ENCODE measurements at regions of chr12 and their contacts with region 1.

Region 1: GRCh38 chr12:12376646-12377448 is 20.0 kb downstream of the BORCS5 start:
- DNase-seq: peak; percentile 77
- CTCF ChIP-seq: peak; percentile 46

Region 2: DNA sequence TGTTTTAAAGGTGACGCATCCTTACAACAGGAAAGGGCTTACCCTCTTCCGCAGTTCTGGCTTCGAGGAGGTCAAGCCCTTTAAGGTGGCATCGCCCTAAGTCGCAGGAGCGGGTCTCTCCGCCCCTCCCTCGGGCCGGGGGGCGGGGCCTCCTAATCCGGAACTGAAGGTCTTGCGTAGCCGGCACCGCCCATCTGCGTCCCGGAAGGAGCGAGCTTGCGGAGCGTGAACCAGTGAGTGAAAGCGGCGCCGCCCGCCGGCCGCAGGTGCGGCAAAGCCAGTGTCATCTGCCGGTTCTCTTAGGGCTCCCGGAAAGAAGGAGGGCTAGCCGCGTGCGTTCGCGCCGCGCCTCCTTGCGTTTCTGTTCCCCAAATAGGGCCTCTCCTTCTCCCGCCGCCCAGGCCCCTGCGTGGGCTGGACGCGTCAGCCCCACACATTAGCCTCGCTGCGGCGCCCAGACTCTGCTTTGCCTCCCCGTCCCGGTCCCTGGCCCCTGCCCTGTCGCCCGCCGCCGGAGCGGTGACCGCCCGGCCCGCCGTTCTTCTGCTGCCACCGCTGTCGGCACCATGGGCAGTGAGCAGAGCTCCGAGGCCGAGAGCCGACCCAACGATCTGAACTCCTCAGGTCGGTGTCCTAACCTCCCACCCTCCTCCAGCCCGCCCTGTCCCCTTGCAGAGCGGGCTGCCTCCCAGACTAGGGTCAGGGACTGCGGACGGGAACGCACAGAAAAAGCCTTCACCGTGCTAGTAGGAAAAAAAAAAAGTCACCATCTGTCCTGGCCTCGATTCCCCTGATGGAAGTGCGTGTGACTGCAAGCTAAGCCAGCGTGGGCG is 19.7 kb before region 1 on chr12 and contains the start of gene BORCS5:
- CTCF ChIA-PET with region 1: interaction called, 27 read pairs
- POLR2A ChIA-PET with region 1: no interaction called
- DNase-seq: peak; percentile 96
- CTCF ChIP-seq: peak; percentile 29

Region 3: GRCh38 chr12:12365931-12366431 is 10.9 kb before region 1 on chr12:
- CTCF ChIA-PET with region 1: interaction called, 42 read pairs
- POLR2A ChIA-PET with region 1: no interaction called
- DNase-seq: no peak
- CTCF ChIP-seq: no peak

Region 4: DNA sequence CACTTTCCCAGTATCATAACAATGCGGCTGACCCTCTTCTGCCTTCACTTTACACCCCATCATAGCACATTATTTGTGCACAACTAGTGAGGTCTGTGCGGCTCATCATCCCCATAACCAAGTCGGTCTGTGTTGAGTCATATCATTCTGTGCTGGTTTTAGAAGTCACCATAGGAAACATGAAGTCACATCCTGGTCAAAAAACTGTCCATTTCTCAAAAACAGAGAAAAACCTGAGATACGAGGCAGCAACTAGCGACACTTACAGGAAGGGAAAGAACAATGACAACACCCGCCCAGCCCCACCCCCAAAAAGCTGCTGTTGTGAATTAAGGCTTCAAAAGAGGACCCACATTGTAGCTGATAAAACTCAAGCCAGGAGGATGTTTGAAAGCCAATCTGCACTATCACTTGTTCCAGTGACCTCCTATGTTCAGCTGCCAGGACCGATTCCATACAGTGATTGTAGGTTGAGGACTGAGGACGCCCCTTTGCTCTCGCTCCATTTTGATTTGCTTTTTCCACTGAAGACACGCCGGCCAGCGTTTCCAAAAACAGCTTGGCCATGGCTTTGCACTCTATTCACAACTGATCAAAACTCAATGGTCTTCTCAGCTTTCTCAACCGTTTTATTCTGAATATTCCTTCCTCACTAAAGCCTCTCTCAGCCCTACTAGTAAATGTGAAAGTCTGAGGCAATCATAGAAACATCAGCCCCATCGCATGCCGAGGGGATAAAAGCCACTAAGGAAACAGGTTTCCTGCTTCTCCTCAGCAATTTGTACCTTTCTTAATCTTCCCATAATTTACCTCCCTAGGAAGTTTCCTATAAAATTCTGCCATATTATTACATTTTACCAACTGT is 98.3 kb after region 1 on chr12:
- CTCF ChIA-PET with region 1: interaction called, 10 read pairs
- POLR2A ChIA-PET with region 1: no interaction called
- DNase-seq: peak; percentile 83
- CTCF ChIP-seq: peak; percentile 22

Region 5: GRCh38 chr12:12654691-12655460 is 278.0 kb after region 1 on chr12:
- CTCF ChIA-PET with region 1: interaction called, 44 read pairs
- POLR2A ChIA-PET with region 1: no interaction called
- DNase-seq: no peak
- CTCF ChIP-seq: no peak

Region 6: GRCh38 chr12:12661086-12661485 is 284.2 kb after region 1 on chr12:
- CTCF ChIA-PET with region 1: interaction called, 44 read pairs
- POLR2A ChIA-PET with region 1: no interaction called
- DNase-seq: no peak
- CTCF ChIP-seq: no peak